ENCODE measurements at regions of chr4 and their contacts with region 1.

Region 1: DNA sequence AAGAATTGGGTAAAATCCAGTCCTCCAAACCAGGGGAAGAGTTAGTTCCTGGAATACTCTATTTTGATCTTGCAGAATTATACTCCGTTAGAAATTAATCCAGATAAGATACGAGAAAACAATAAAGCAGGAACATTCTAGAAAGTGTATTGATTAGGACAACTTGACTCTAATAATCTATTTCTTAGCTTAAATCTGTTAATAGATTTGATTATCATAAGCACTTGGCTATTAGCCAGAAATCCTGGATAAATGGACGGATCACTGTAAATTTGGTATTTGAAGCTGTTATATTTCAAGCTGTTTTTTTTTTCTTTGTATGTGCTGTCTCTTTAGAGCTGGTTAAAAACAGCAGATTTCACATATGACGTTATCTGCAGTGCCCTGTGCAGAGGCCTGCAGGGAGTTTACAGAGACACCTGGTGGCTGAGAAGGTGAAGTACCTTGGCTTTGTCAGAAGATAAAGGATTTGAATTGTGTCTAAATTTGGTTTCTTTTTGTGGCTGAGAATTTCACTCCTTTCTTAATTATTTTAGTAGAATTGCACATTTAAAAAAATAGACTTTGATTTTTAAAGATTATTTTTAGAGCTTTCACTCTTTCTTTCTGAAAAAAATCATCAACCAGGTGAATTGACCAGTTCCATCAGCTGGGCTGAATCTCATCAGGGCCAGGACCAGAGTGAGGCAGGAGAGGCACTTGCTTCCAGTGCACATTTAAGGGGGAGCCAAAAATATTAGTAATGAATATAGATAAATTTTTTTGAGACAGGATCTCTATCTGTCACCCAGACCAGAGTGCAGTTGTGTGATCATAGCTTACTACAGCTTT is 9.7 kb upstream of the CHRNA9 start:
- DNase-seq: peak; percentile 38 to 84 (median 70)
- H3K4me3 ChIP-seq: no peak overlapping the region
- H3K4me3 Mint-ChIP-seq: no peak overlapping the region
- H3K27ac ChIP-seq: no peak overlapping the region
- H3K27ac Mint-ChIP-seq: peak overlapping the region in 6 of 8 donors; percentile 5 to 76 (median 61)
- H3K4me1 ChIP-seq: peaks cover 5% of the 10 kb centered on the region
- H3K4me1 Mint-ChIP-seq: peaks cover 6 to 7% (median 7%) of the 10 kb centered on the region in 3 donors
- H3K27me3 ChIP-seq: no peaks in the 10 kb centered on the region
- H3K27me3 Mint-ChIP-seq: peaks cover 1 to 8% of the 10 kb centered on the region in 2 donors

Region 2: DNA sequence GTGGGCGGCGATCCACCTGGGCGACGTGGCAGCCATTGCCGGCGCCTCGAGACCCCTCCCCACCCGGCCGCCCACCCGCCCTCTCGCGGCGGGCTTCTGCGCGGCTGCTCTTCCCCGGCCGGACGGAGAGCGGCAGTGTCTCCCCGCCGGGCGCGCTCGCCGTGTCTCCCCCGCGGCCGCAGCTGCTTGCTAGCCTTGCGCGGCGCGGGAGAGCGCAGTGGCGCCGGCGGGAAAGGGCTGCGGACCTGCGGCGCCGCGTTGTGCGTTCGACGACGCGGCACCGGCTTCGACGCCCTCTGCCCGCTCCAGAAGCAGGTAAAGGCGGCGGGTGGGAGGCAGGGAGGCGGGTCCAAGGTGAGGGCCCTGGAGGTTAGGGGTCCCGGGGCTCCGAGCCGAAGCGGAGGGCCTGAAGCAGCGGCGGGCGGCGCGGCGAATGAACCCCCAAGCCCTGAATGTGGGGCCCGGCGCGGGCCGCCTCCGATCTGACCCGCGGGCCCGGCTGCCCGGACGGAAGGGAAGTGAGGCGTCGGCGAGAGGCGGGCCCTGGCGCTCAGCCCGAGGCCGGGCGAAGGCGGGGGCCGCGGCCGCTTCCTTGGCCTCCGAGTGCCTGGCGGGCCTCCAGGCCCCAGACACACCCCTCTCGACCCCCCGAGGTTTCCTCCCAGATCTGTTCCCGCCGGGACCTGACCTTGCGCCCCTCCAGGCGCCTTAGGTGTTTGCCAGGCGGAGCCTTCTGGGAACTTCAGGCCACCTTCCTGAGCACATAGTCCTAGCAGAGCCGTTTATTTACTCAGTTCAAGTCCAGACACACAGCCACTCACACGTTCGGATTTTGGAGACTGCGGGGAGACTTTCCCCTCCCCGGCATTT is 268.5 kb before region 1 on chr4 and contains the start of gene N4BP2:
- CTCF ChIA-PET with region 1: interaction called, 45 read pairs
- POLR2A ChIA-PET with region 1: interaction called, 13 read pairs
- DNase-seq: peak; percentile 53 to 82 (median 69)
- H3K4me3 ChIP-seq: peak within 1 kb of the TSS; percentile 96
- H3K4me3 Mint-ChIP-seq: peak within 1 kb of the TSS; percentile 89 to 98 (median 95)
- H3K27ac ChIP-seq: peak within 1 kb of the TSS; percentile 83
- H3K27ac Mint-ChIP-seq: peak within 1 kb of the TSS; percentile 91 to 99 (median 96)
- H3K4me1 ChIP-seq: peaks cover 21% of the 10 kb centered on the region
- H3K4me1 Mint-ChIP-seq: peaks cover 27 to 39% (median 32%) of the 10 kb centered on the region in 3 donors
- H3K27me3 ChIP-seq: no peaks in the 10 kb centered on the region
- H3K27me3 Mint-ChIP-seq: no peaks in the 10 kb centered on the region
- total RNA-seq, gene N4BP2: 18.0 to 21.1 TPM

Region 3: DNA sequence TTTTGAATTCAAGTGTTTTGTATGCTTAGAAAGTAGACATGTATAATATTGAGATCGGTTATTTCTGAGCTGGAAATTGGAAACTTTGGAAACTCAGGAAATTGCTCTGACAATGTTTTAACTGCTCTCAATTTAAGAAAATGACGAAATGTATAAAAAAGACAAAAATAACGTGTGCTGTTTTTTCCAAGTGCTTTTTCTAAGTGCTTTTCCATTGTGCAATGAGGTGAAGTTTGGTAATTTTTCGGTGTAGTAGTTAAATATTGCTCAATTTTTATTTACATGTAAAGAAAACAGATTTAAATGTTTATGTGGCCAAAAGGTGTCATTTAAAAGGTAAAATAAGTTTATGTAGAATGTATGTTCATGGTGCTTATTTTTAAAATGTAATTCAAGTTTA is 168.0 kb before region 1 on chr4:
- CTCF ChIA-PET with region 1: interaction called, 49 read pairs
- POLR2A ChIA-PET with region 1: no interaction called
- DNase-seq: no peak
- H3K4me3 ChIP-seq: no peak overlapping the region
- H3K4me3 Mint-ChIP-seq: no peak overlapping the region
- H3K27ac ChIP-seq: no peak overlapping the region
- H3K27ac Mint-ChIP-seq: no peak overlapping the region
- H3K4me1 ChIP-seq: peaks cover 15% of the 10 kb centered on the region
- H3K4me1 Mint-ChIP-seq: peaks cover 10 to 17% (median 13%) of the 10 kb centered on the region in 3 donors
- H3K27me3 ChIP-seq: no peaks in the 10 kb centered on the region
- H3K27me3 Mint-ChIP-seq: no peaks in the 10 kb centered on the region

Region 4: DNA sequence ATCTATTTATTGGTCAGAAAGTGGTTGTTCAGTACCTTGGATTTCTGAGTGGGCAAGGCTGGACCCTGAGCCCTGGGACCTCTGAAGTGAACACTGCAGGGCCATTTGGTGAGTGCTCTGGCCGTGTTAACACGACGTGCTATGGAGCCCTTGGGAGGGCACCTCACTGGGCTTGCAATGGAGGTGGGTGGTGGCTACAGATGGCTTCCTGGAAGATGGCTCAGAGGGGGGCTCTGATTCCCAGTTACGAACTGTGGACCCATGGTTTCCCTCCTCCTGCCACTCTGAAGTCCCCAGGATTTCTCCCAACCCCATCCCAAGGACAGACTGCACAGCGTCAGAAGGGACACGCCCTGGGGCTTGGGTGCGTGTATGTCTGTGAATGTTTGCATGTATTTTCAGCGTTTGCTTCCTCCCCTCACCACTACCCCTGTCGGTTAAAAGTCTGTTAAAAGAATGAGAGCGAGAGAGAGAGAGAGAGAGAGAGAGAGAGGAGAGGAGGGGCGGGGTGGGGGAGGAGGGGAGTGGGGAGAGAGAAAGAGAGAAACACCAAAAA is 132.3 kb before region 1 on chr4:
- CTCF ChIA-PET with region 1: interaction called, 24 read pairs
- POLR2A ChIA-PET with region 1: interaction called, 3 read pairs
- DNase-seq: peak in 2 of 5 donors; percentile 66 to 75
- H3K4me3 ChIP-seq: peak overlapping the region; percentile 63
- H3K4me3 Mint-ChIP-seq: peak overlapping the region; percentile 73 to 98 (median 82)
- H3K27ac ChIP-seq: peak overlapping the region; percentile 22
- H3K27ac Mint-ChIP-seq: peak overlapping the region; percentile 93 to 100 (median 99)
- H3K4me1 ChIP-seq: peaks cover 51% of the 10 kb centered on the region
- H3K4me1 Mint-ChIP-seq: peaks cover 48 to 80% (median 62%) of the 10 kb centered on the region in 3 donors
- H3K27me3 ChIP-seq: no peaks in the 10 kb centered on the region
- H3K27me3 Mint-ChIP-seq: no peaks in the 10 kb centered on the region

Region 5: DNA sequence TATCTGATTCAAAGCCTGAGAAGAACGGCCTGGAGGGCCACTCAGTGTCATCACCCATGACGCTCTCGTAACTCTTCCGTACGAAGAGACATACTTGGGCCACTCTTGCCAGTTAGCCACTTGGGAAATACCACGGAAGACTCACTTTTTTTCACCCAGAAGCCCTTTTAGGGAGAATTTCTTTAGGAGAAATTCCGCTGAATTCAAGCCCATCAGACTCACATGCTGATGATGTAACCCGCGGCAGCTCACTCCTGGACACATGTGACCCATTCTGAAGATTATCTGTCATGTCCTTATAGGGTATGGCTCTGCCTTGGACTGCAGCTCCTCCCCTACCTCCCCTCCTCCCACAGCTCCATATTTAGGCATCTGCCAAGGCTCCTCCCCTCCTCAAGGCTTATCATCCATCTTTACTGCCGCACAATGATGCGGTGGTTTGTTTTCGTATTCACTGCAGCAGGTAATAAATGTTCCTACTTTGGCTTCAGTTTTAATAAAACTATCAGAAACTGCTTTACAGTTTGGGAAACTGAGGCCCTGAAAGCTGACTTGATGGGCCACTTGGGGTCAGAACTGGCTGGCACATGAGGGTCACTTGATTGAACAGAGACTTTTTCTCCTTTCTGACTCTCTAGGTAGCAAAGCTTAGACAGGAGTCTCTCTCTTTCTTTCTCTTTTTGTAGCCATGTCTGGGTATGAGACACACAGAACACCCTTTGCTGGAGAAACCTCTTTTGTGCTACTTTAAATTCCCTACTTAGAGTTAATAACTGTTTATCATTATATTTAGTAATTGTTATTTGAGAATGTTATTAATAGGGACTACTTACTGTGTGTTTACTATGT is 86.5 kb before region 1 on chr4:
- CTCF ChIA-PET with region 1: interaction called, 10 read pairs
- POLR2A ChIA-PET with region 1: no interaction called
- DNase-seq: peak; percentile 59 to 93 (median 82)
- H3K4me3 ChIP-seq: peak overlapping the region; percentile 35
- H3K4me3 Mint-ChIP-seq: peak overlapping the region; percentile 70 to 94 (median 81)
- H3K27ac ChIP-seq: peak overlapping the region; percentile 91
- H3K27ac Mint-ChIP-seq: peak overlapping the region; percentile 94 to 100 (median 98)
- H3K4me1 ChIP-seq: peaks cover 96% of the 10 kb centered on the region
- H3K4me1 Mint-ChIP-seq: peaks cover 88 to 96% (median 96%) of the 10 kb centered on the region in 3 donors
- H3K27me3 ChIP-seq: no peaks in the 10 kb centered on the region
- H3K27me3 Mint-ChIP-seq: no peaks in the 10 kb centered on the region